Thyroid gland (tissue), 4 donors: ENCODE measurements at regions of chr9 and their contacts with region 1.

Region 1: DNA sequence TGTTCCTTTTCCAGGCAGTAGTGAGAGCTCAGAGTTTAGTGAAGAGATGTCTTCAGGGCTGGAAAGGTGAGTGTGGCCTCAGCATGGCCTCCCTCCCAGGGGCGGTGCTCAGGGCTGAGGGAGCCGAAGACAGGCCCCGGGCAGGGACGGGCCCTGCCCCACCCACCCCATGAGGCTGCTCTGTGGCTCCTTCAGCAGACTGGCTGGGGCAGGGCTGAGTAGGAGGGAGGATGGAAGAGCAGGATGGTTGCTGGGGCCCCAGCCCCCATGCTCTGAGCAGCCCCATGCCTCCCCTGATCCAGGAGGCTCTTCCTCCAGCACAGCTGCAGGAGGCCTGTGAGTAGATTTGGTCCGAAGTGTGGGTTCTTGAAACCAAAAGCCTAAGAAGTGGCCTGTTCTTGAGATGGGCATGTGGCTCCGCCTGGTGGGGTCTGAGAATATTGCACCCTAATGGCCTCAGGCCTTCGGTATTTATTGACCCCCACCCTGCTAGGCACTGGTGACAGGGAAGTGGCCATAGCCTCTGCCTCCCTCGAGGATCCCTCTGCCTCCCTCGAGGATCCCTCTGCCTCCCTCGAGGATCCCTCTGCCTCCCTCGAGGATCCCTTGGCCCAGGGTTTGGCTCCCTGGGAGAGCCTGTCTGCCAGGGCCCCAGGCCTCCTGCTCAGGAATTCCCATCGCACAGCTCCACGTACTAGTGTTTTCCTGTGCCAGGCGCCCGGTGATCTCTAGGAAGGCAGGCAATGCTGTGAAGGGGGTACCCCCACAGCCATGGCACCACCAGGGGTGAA is 65.4 kb upstream of the GARNL3 start:
- DNase-seq: peak; percentile 75 to 76
- H3K4me3 ChIP-seq: no peak overlapping the region
- H3K27ac ChIP-seq: peak overlapping the region in 2 of 3 donors; percentile 5 to 42
- H3K4me1 ChIP-seq: peaks cover 0 to 16% of the 10 kb centered on the region in 2 donors
- H3K27me3 ChIP-seq: no peaks in the 10 kb centered on the region
- CTCF ChIP-seq: peak; percentile 64 to 98 (median 91)
- POLR2A ChIP-seq: no peak

Region 2: GRCh38 chr9:126939821-126940221 is 259.4 kb before region 1 on chr9:
- intact Hi-C with region 1: loop called (anchors 2 kb)
- DNase-seq: no peak
- H3K4me3 ChIP-seq: no peak overlapping the region
- H3K27ac ChIP-seq: no peak overlapping the region
- H3K4me1 ChIP-seq: no peaks in the 10 kb centered on the region
- H3K27me3 ChIP-seq: no peaks in the 10 kb centered on the region
- CTCF ChIP-seq: no peak
- POLR2A ChIP-seq: no peak

Region 3: DNA sequence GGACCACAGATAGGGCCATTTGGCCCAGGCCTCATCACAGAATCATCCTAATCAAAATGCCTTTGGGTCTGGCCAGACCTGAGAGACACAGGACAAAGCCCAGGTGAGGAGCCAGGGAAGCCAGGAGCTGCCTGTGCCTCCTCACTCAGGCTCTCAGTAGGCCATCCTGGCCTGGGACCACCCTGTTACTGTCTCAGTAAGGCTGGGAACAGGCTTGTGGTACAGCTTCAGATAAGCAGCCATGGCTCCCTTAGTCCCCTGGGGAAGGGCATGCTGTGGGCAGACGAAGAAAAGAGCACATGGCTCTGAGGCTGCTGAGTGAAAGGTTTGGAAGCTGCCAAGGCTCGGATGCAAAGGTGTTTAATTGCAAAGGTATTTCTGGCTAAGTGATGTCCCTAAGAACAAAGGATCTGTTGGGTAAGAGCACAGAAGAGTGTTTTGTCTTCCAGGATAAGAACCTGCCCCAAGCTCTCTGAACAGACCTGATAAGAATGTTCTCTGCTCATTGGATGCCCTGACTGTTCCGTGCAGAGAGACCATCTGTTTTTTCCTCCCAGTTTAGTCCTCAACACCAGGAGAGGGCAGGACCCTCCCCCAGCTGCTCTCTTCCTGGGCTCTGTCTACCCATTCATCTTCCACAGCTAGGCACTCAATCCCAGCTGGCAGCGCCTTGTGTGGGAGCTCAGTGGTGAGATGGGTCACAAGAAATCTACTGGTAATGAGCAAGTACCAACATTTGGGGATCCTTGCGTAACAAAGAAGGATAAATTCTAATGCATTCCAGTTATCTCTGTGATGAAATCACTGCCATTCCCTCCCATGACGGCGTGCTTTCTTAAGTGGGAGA is 94.5 kb before region 1 on chr9:
- intact Hi-C with region 1: no loop called
- DNase-seq: no peak
- H3K4me3 ChIP-seq: no peak overlapping the region
- H3K27ac ChIP-seq: no peak overlapping the region
- H3K4me1 ChIP-seq: no peaks in the 10 kb centered on the region
- H3K27me3 ChIP-seq: no peaks in the 10 kb centered on the region
- CTCF ChIP-seq: no peak
- POLR2A ChIP-seq: no peak